ENCODE measurements at regions of chr4 and their contacts with region 1.

Region 1: GRCh38 chr4:89410687-89411086 is 103.1 kb upstream of the GPRIN3 start:
- DNase-seq: no peak
- ATAC-seq: no peak
- H3K4me3 Mint-ChIP-seq: no peak overlapping the region
- H3K27ac Mint-ChIP-seq: no peak overlapping the region
- H3K4me1 Mint-ChIP-seq: peaks cover 8% of the 10 kb centered on the region
- H3K27me3 Mint-ChIP-seq: peaks cover 2% of the 10 kb centered on the region
- CTCF ChIP-seq: no peak

Region 2: GRCh38 chr4:89254847-89255246 is 155.8 kb before region 1 on chr4:
- CTCF ChIA-PET with region 1: interaction called, 3 read pairs
- POLR2A ChIA-PET with region 1: no interaction called
- intact Hi-C with region 1: loop called (anchors 5 kb)
- DNase-seq: no peak
- ATAC-seq: peak; percentile 64
- H3K4me3 Mint-ChIP-seq: no peak overlapping the region
- H3K27ac Mint-ChIP-seq: no peak overlapping the region
- H3K4me1 Mint-ChIP-seq: no peaks in the 10 kb centered on the region
- H3K27me3 Mint-ChIP-seq: no peaks in the 10 kb centered on the region
- CTCF ChIP-seq: peak; percentile 88

Measured in activated B cell treated with CpG ODN at 0.5 μM for 24 hours (primary cell).